ENCODE measurements at regions of chr11 and their contacts with region 1.

Region 1: DNA sequence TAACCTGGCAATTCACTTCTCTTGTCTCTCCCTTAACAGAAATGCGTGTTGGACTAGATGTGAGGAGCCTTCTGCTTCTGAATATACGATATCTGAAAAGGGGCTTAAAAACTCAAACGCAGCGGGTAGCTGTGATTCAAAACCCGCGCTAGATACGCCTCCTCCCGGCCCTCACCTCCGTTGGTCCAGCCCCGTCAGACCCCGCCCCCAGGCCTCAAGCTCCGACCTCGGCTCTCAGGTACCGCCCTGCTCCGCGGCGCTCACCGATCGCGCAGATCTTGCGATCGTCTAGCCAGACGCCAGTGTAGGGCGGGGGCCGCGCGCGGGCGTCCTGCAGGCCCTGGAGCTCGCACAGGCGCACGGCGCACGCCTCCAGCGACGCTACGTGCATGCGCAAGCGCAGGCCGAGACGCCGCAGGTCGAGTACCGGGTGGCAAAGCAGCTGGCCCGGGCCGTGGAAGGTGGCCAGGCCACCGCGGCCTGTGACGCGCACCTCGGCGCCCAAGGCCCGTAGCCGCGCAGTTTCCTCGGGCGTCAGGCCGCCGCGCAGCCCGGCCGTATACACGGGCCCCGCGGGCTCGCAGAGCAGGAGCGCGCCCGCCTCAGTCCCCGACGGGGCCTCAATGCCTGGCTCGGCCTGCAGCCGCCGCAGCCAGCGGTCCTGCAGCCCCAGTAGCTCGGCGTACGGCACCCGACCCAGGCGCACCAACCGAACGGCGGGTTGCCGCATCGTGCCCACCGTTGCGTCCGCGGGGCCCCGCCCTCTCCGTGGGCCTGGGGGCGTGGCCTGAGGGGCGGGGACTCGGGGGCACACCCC is at the start of gene LIPT2:
- DNase-seq: peak; percentile 92

Region 2: DNA sequence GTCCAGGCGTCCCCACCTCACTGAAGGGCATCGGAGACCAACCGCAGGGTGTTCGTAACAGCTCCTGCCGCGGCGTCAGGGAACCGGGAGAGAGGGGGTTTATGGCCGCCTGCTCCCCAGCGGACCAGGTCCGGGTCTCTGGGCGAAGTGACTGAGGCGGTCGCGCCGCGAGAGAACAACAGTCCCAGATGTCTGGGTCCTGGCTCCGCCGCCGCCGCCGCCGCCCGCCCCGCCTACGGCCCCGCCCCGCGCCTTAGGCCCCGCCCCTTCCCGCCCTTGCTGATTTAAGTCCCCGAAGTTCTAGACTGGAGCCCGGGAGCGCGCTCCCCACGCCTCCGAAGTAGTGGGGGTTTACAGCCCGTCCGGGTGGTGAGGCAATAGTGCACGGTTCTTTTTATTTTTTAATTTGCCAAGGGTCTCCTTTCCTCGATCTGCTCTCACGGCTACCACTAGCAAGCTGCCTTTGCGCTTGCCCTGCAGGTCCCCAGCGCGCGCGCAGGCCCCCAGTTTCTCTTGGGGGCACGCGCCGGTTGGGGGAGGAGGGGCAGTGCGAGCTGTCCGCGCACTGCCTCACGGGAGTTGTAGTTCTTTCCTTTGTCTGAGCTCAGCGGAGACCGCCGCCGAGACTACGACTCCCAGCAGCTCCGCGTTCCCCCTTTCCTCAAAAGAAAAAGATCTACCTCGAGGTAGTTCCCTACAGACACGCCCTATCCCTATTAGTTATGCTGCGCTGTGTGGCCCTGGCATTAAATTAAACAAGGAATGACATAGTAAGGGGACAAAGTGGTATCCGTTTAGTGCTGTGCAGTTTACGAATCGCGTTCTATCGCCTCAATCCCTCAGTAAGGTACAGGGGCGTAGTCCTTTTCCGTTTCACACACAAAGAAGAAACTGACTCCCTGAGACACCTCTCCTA is 94.7 kb before region 1 on chr11 and contains the start of gene PGM2L1:
- CTCF ChIA-PET with region 1: no interaction called
- POLR2A ChIA-PET with region 1: interaction called, 12 read pairs
- DNase-seq: peak; percentile 89

Region 3: GRCh38 chr11:74470526-74470925 is 22.7 kb before region 1 on chr11:
- CTCF ChIA-PET with region 1: no interaction called
- POLR2A ChIA-PET with region 1: interaction called, 11 read pairs
- DNase-seq: no peak

Region 4: DNA sequence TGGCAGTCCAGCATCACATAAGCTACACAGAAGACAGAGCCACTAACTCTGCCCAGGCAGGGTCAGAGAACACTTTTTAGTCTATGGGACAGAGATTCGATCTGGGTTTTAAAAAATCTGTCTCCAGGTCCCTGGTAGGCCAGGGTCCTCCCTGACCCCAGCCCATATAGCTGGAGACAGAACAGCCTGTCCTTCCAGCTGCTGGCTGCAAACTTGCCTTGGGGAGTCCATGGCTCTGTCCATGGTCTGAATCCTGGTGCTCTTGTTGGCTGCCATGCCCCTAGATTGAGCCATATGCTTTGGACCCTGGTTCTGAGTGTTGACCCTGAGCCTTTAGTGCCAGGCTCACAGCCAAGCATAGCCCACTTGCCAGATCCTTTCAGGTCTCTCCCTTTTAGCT is 13.6 kb after region 1 on chr11:
- CTCF ChIA-PET with region 1: interaction called, 4 read pairs
- POLR2A ChIA-PET with region 1: interaction called, 13 read pairs
- DNase-seq: no peak

Region 5: GRCh38 chr11:74570266-74571061 is 77.3 kb after region 1 on chr11:
- CTCF ChIA-PET with region 1: interaction called, 3 read pairs
- POLR2A ChIA-PET with region 1: interaction called, 13 read pairs
- DNase-seq: peak; percentile 72